HAP-1 (cell line): ENCODE measurements at regions of chr3 and their contacts with region 1.

Region 1: GRCh38 chr3:17894434-17895060 is 152.1 kb upstream of the TBC1D5 start:
- DNase-seq: peak; percentile 77 to 86
- H3K4me3 ChIP-seq: no peak overlapping the region
- H3K4me1 ChIP-seq: peaks cover 5% of the 10 kb centered on the region
- H3K27me3 ChIP-seq: no peaks in the 10 kb centered on the region

Region 2: DNA sequence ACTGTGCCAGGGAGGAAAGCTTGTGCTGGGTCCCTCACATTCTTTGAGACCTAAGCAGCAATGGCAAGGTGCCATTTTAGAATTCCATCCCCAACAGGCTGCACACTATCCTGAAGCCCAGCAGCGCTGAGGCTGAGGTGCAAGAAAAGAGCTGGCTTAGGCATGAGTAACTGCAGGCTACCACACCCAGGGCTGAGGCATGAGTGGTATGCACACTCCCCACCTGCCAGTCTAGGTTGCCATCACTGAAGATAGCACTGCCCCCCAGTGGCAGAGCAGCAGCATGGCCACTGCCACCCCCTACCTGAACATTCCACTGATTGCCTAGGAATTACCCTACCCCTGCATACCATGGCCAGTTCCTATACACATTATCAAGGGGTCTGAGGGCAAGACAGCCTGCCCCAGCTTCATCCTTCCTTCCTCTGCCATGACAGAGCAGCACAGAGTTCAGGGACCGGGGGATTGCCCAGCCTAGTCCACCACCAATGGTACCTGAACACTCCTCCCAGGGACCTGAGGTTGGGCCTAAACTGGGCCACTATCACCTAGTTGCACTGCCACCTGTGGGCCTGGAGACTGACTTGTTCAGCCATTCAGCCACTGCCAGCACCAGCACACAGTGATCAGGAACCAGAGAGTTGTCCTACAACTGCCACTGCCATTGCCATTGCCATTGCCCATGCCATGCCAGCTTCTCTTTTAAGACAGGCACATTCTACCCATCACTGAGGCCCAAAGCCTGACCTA is 400.8 kb after region 1 on chr3:
- in situ Hi-C with region 1: loop called (anchors 25 kb)
- DNase-seq: peak; percentile 79 to 88
- H3K4me3 ChIP-seq: no peak overlapping the region
- H3K4me1 ChIP-seq: peaks cover 10% of the 10 kb centered on the region
- H3K27me3 ChIP-seq: no peaks in the 10 kb centered on the region

Region 3: GRCh38 chr3:18389108-18389733 is 494.7 kb after region 1 on chr3:
- in situ Hi-C with region 1: loop called (anchors 25 kb)
- DNase-seq: peak in 1 of 2 experiments; percentile 38
- H3K4me3 ChIP-seq: no peak overlapping the region
- H3K4me1 ChIP-seq: no peaks in the 10 kb centered on the region
- H3K27me3 ChIP-seq: no peaks in the 10 kb centered on the region